Spleen (tissue), 13 donors: ENCODE measurements at regions of chr11 and their contacts with region 1.

Region 1: DNA sequence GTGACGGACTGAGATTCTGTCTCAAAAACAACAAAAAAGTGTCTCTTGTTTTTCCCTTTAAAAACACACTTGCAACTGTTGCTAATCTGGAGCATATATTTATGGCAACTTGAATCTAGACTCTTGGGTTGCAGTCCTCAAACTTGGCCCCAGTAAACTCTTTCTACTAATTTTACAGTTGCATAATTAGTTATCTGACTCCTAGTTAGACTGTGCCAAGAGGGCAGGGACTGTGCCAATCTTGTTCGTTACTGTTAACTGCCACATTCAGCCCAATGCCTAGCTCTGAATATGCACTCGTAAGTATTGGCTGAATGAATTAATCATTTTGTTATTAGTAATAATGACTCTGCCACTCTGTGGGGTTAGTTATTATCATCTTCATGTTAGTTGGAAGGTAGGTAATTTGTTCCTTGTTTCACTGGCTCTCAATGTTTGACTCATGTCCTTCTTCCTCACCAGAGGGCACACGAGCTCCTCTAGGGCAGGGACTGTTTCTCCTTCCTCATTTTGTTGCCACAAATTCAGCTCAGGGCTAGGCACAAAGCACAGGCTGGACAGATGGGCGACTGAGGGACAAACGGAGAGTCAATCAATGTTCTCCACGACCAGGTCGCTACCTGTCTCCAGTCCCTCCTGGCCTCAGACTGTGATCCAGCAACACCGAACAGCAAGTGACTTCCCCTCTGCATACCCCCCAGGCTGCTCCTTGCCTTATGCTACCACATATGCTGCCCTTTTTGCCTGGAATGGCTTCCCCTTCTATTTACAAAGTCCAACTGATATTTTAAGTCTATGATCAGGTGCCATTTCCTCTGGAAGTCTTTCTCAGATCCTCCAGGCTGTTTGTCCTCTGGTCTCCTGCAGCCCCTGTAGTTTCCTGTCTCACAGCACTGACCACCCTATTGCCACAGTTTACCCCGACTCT is 9.0 kb downstream of the CLPB start:
- DNase-seq: no peak
- H3K4me3 ChIP-seq: no peak overlapping the region
- H3K27ac ChIP-seq: peak overlapping the region in 3 of 8 donors; percentile 14 to 24 (median 21)
- H3K4me1 ChIP-seq: peaks cover 0 to 65% (median 17%) of the 10 kb centered on the region in 6 donors
- H3K27me3 ChIP-seq: no peaks in the 10 kb centered on the region
- CTCF ChIP-seq: no peak
- POLR2A ChIP-seq: no peak

Region 2: GRCh38 chr11:72293910-72294615 is 131.3 kb before region 1 on chr11:
- intact Hi-C with region 1: loop called (anchors 10 kb)
- DNase-seq: no peak
- H3K4me3 ChIP-seq: no peak overlapping the region
- H3K27ac ChIP-seq: no peak overlapping the region
- H3K4me1 ChIP-seq: no peaks in the 10 kb centered on the region
- H3K27me3 ChIP-seq: no peaks in the 10 kb centered on the region
- CTCF ChIP-seq: no peak
- POLR2A ChIP-seq: no peak